ENCODE measurements at regions of chr2 and their contacts with region 1.

Region 1: DNA sequence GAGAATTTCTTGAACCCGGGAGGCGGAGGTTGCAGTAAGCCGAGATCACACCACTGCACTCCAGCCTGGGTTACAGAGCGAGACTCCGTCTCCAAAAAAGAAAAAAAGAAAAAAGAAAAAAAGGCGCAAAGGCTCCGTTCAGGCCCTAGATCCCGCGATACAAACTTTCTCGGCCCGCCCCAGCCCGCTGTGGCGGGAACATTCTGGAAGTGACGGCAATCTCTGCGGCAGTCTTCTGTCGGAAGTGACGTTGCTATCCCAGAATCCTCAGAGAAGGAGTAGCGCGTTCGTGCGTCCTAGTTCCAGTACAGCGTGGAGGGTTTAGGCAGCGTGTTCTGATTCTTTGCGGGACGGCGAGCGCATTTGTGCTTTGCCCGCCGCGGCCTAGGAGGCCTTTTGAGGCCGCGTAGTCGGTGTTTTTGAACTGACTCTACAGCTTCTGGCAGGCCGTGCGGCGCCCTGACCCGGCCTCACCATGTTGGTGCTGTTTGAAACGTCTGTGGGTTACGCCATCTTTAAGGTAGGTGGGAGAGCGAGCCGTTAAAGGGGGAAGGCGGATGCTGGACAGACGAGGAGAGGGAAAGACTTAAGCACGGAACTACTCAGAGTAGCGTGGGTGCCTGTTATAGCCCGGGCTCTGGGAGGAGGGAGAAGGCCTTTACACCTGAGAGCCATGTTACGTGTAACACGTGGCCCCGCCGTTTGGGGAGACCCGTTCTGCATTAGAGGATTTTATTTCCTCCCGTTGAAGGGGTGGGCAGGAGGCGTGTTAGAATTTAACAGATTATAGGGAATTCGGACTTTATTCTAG is at the start of gene NOP58:
- DNase-seq: peak; percentile 94
- H3K4me3 ChIP-seq: peak within 1 kb of the TSS; percentile 61 to 87 (median 84)
- H3K27ac ChIP-seq: peak within 1 kb of the TSS; percentile 98
- H3K4me1 ChIP-seq: peaks cover 8% of the 10 kb centered on the region
- H3K27me3 ChIP-seq: no peaks in the 10 kb centered on the region
- CTCF ChIP-seq: no peak
- total RNA-seq, gene NOP58: 50.3 to 98.9 TPM

Region 2: GRCh38 chr2:202238234-202239197 is 27.2 kb before region 1 on chr2 and contains the start of gene SUMO1:
- CTCF ChIA-PET with region 1: no interaction called
- dilution Hi-C with region 1: no loop called
- in situ Hi-C with region 1: no loop called
- intact Hi-C with region 1: loop called (anchors 2 kb)
- DNase-seq: peak; percentile 85
- H3K4me3 ChIP-seq: peak within 1 kb of the TSS; percentile 85 to 97 (median 93)
- H3K27ac ChIP-seq: peak within 1 kb of the TSS; percentile 82
- H3K4me1 ChIP-seq: no peaks in the 10 kb centered on the region
- H3K27me3 ChIP-seq: no peaks in the 10 kb centered on the region
- CTCF ChIP-seq: no peak
- total RNA-seq, gene SUMO1: 95.5 to 98.1 TPM

Region 3: GRCh38 chr2:202249521-202249850 is 16.2 kb before region 1 on chr2:
- CTCF ChIA-PET with region 1: no interaction called
- dilution Hi-C with region 1: no loop called
- in situ Hi-C with region 1: no loop called
- intact Hi-C with region 1: loop called (anchors 1 kb)
- DNase-seq: peak; percentile 89
- H3K4me3 ChIP-seq: no peak overlapping the region
- H3K27ac ChIP-seq: peak overlapping the region; percentile 50
- H3K4me1 ChIP-seq: peaks cover 6% of the 10 kb centered on the region
- H3K27me3 ChIP-seq: no peaks in the 10 kb centered on the region
- CTCF ChIP-seq: no peak

Region 4: GRCh38 chr2:202278944-202279343 is 13.3 kb after region 1 on chr2:
- CTCF ChIA-PET with region 1: no interaction called
- dilution Hi-C with region 1: no loop called
- in situ Hi-C with region 1: no loop called
- intact Hi-C with region 1: loop called (anchors 1 kb)
- DNase-seq: peak; percentile 41
- H3K4me3 ChIP-seq: no peak overlapping the region
- H3K27ac ChIP-seq: peak overlapping the region; percentile 75
- H3K4me1 ChIP-seq: peaks cover 28% of the 10 kb centered on the region
- H3K27me3 ChIP-seq: no peaks in the 10 kb centered on the region
- CTCF ChIP-seq: peak; percentile 52 to 66